Heart left ventricle (tissue), 16 donors: ENCODE measurements at regions of chr16 and their contacts with region 1.

Region 1: GRCh38 chr16:11797166-11797956 is at the start of gene ZC3H7A:
- DNase-seq: peak; percentile 96 to 99 (median 99)
- ATAC-seq: peak; percentile 98 to 99 (median 99)
- H3K4me3 ChIP-seq: peak within 1 kb of the TSS; percentile 59 to 100 (median 96)
- H3K27ac ChIP-seq: peak within 1 kb of the TSS; percentile 87 to 99 (median 98)
- H3K4me1 ChIP-seq: peaks cover 7 to 78% (median 53%) of the 10 kb centered on the region in 12 donors
- H3K27me3 ChIP-seq: no peaks in the 10 kb centered on the region
- CTCF ChIP-seq: peak; percentile 55 to 98 (median 86)
- POLR2A ChIP-seq: peak; percentile 47 to 87
- total RNA-seq, gene ZC3H7A: 20.2 to 42.3 (median 29.7) TPM

Region 2: GRCh38 chr16:10944249-10945064 is 852.9 kb before region 1 on chr16 and contains the start of gene CLEC16A:
- intact Hi-C with region 1: loop called in 1 of 10 experiments (anchors 5 kb)
- DNase-seq: peak; percentile 98 to 99 (median 99)
- ATAC-seq: peak; percentile 84 to 91 (median 87)
- H3K4me3 ChIP-seq: peak within 1 kb of the TSS; percentile 63 to 99 (median 89)
- H3K27ac ChIP-seq: peak within 1 kb of the TSS in 11 of 12 donors; percentile 54 to 96 (median 84)
- H3K4me1 ChIP-seq: peaks cover 8 to 64% (median 46%) of the 10 kb centered on the region in 12 donors
- H3K27me3 ChIP-seq: no peaks in the 10 kb centered on the region
- CTCF ChIP-seq: peak in 2 of 12 donors; percentile 5 to 13
- POLR2A ChIP-seq: peak; percentile 50 to 93
- total RNA-seq, gene CLEC16A: 20.3 to 41.1 (median 23.7) TPM

Region 3: GRCh38 chr16:11667824-11668622 is 129.3 kb before region 1 on chr16 and contains the start of gene SNN:
- intact Hi-C with region 1: loop called in 1 of 10 experiments (anchors 10 kb)
- DNase-seq: peak; percentile 90 to 96 (median 92)
- ATAC-seq: peak; percentile 84 to 93 (median 90)
- H3K4me3 ChIP-seq: peak within 1 kb of the TSS; percentile 70 to 100 (median 90)
- H3K27ac ChIP-seq: peak within 1 kb of the TSS; percentile 47 to 90 (median 84)
- H3K4me1 ChIP-seq: peaks cover 3 to 64% (median 47%) of the 10 kb centered on the region in 12 donors
- H3K27me3 ChIP-seq: no peaks in the 10 kb centered on the region
- CTCF ChIP-seq: no peak
- POLR2A ChIP-seq: no peak
- total RNA-seq, gene SNN: 17.0 to 60.0 (median 36.4) TPM

Region 4: GRCh38 chr16:11742539-11743307 is 54.6 kb before region 1 on chr16 and contains the start of gene TXNDC11:
- intact Hi-C with region 1: loop called in 7 of 10 experiments (anchors 2 to 10 kb)
- DNase-seq: peak; percentile 99 to 100 (median 99)
- ATAC-seq: peak; percentile 98 to 100 (median 98)
- H3K4me3 ChIP-seq: peak within 1 kb of the TSS; percentile 68 to 98 (median 94)
- H3K27ac ChIP-seq: peak within 1 kb of the TSS; percentile 93 to 99 (median 98)
- H3K4me1 ChIP-seq: peaks cover 5 to 49% (median 32%) of the 10 kb centered on the region in 12 donors
- H3K27me3 ChIP-seq: no peaks in the 10 kb centered on the region
- CTCF ChIP-seq: no peak
- POLR2A ChIP-seq: peak; percentile 98 to 99
- total RNA-seq, gene TXNDC11: 18.9 to 29.3 (median 25.9) TPM

Region 5: GRCh38 chr16:11748404-11749254 is 48.7 kb before region 1 on chr16:
- intact Hi-C with region 1: loop called in 8 of 10 experiments (anchors 2 to 10 kb)
- DNase-seq: no peak
- ATAC-seq: no peak
- H3K4me3 ChIP-seq: no peak overlapping the region
- H3K27ac ChIP-seq: peak overlapping the region in 1 of 12 donors; percentile 4
- H3K4me1 ChIP-seq: peaks cover 0 to 5% (median under 1%) of the 10 kb centered on the region in 12 donors
- H3K27me3 ChIP-seq: no peaks in the 10 kb centered on the region
- CTCF ChIP-seq: no peak
- POLR2A ChIP-seq: no peak

Region 6: GRCh38 chr16:11851294-11852091 is 54.1 kb after region 1 on chr16 and contains the start of gene RSL1D1:
- intact Hi-C with region 1: loop called in 2 of 10 experiments (anchors 2 to 5 kb)
- DNase-seq: peak; percentile 92 to 95 (median 93)
- ATAC-seq: peak; percentile 97 to 99 (median 98)
- H3K4me3 ChIP-seq: peak within 1 kb of the TSS; percentile 59 to 98 (median 77)
- H3K27ac ChIP-seq: peak within 1 kb of the TSS; percentile 49 to 89 (median 86)
- H3K4me1 ChIP-seq: peaks cover 2 to 50% (median 33%) of the 10 kb centered on the region in 12 donors
- H3K27me3 ChIP-seq: no peaks in the 10 kb centered on the region
- CTCF ChIP-seq: no peak
- POLR2A ChIP-seq: peak in 1 of 2 donors; percentile 88
- total RNA-seq, gene RSL1D1: 81.4 to 125 (median 92.3) TPM

Region 7: GRCh38 chr16:11907160-11907970 is 110.0 kb after region 1 on chr16:
- intact Hi-C with region 1: loop called in 1 of 10 experiments (anchors 2 kb)
- DNase-seq: no peak
- ATAC-seq: no peak
- H3K4me3 ChIP-seq: no peak overlapping the region
- H3K27ac ChIP-seq: no peak overlapping the region
- H3K4me1 ChIP-seq: peaks cover 0 to 39% (median 23%) of the 10 kb centered on the region in 12 donors
- H3K27me3 ChIP-seq: no peaks in the 10 kb centered on the region
- CTCF ChIP-seq: no peak
- POLR2A ChIP-seq: no peak